RWPE1 (cell line): ENCODE measurements at regions of chr20 and their contacts with region 1.

Region 1: DNA sequence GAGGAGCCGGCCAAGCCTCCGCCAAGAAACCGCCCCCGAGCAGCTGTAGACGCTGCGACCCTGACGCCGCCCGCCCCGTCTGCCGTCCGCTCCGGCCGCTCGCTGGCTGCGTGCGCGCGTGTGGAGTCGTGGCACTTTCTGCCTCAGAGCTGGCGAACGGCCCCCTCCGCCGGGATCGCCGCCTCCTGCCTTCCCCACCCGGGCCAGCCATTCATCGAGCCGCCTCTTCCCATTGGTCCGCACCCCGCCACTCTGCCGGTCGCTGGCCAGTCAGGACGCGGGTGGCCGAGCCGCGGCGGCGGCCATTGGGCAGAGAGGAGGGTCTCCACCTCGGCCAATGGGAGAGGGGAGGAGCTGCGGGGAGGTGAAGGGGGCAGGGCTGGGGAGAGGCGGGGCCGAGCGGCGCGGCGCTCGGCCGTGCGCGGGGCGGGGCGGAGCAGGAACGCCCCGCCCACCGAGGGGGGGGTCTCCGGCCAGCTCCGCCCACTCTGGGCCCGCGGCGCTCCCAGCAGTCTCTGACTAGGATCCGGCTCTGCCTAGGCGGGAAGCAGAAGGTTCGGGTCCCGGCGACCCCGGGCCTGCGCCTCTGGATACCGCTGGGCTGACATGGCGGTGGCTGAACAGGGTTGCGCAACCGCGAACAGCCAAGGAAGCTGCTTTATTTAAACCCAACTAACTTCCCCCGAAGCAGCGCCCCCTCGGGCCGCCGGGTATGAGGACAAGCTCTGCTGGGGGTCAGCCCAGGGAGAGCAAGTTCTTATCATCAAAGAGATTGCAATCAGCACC is at the start of gene RRBP1:
- DNase-seq: peak; percentile 99
- H3K27ac ChIP-seq: peak within 1 kb of the TSS; percentile 97
- CTCF ChIP-seq: peak; percentile 80

Region 2: DNA sequence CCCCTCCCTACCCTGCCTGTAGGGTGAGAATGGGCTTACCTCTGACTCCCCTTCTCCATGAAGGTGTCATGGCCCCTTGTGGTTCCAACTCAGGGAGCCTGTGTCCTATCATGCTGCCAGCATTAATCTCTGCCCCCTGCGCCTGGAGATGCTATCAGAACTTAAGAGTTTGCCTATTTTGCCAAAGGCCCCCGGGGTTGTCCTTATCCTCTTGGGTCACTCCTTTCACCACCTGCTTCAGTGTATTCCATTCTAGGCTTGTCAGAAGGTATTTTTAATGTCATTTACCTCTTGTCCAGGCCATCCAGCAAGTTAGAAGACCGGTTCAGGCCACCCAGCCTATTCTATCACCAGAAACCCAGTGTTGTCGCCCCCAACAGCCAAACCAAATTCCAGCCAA is 10.7 kb before region 1 on chr20:
- CTCF ChIA-PET with region 1: no interaction called
- POLR2A ChIA-PET with region 1: no interaction called
- DNase-seq: no peak
- H3K27ac ChIP-seq: no peak overlapping the region
- CTCF ChIP-seq: no peak

Region 3: DNA sequence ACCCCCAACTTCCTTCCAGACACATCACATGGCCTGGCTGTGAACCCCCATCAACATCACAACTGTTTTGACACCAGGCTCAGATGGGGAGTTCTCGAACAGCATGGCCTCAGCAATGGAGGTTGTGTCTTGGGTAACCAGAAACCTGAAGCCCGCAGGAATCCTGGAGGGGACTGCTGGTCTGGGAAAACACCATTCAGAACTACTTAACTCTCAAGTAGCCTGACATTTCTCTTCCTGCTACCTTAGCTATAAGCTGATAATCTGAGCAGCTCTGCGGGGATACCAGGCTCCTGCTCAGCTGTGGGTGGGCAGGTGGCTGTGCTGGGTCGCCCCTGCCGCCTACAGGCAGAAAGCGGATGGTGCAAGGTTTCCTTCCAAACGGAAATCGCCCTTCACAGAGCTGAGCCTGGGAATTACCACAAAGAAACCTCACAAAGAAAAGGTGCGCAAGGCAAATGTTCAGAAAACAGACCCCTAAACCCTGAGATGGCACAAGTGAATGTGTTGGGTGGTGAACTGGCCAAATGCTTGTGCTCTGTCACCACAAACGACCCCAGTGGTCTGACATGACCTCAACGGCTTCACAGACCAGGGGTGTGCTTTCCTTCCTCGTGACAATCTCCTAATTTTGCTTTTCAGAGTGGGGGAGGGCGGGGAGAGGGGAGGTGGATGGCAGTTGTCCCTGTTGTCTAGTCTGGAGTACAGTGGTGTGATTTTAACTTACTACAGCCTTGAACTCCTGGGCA is 256.7 kb after region 1 on chr20:
- CTCF ChIA-PET with region 1: interaction called, 13 read pairs
- POLR2A ChIA-PET with region 1: no interaction called
- DNase-seq: peak; percentile 75
- H3K27ac ChIP-seq: peak overlapping the region; percentile 57
- CTCF ChIP-seq: peak; percentile 85

Region 4: DNA sequence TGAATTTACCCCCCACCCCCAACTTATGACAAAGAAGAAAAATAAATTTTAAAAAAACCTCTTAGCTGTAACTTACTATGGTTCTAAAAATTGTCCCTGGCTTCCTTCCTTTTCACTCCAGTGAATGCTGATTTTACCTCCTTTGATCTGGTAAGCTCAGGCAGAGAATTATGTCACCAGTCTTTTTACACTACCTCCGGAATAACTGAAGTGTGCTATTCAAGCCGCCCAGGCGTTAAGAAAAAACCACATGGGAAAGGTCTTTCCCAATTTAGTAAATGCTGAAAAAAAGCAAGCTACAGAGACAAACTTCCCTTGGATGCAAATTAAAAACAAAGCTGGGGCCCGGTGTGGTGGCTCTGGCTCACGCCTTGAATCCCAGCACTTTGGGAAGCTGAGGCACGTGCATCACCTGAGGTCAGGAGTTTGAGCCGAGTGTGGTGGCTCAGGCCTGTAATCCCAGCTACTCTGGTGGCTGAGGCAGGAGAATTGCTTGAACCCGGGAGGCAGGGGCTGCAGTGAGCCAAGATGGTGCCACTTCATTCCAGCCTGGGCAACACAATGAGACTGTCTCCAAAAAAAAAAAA is 273.9 kb after region 1 on chr20:
- CTCF ChIA-PET with region 1: interaction called, 3 read pairs
- POLR2A ChIA-PET with region 1: interaction called, 11 read pairs
- DNase-seq: no peak
- H3K27ac ChIP-seq: no peak overlapping the region
- CTCF ChIP-seq: no peak